Dorsolateral prefrontal cortex (tissue), 120 donors: ENCODE measurements at regions of chr1 and their contacts with region 1.

Region 1: DNA sequence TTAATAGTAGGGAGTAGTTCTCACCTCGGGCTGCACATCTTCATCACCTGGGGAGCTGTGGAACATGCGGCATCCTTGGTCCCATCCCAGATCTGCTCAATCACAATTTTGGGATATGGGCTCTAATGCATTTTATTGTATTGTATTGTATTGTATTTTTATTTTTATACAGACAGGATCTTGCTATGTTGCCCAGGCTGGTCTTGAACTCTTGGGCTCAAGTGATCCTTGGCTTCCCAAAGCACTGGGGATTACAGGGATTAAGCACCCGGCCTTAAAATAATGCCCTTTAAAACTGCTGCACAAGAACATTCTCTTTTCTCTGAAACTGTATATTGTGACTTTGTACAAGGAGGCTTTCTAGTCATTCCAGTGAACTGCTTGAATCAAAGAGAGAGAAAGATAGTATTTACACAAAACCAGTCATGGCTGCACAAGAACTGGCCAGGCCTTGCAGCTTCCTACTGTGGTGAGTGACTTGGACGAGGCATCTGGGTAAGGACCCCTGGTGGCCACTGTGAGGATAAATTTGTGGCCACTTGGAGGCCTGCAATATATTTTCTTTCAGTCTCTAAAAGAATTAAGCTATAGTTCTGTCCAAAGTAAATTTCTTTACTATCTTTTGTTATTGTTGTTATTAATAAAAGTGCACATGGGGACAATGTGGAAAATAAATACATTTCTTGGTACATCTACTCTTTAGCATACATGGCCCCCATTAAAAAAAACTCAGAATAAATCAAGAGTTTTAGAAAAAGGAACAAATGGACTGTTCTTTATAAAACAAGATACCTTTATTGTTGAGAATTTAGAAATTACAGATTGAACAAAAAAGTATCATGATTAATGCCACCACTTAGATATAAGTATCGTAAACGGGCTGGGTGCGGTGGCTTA is 48.0 kb downstream of the TBCE start:
- DNase-seq: peak in 8 of 10 donors; percentile 20 to 60 (median 50)
- H3K4me3 ChIP-seq: no peak overlapping the region
- H3K27ac ChIP-seq: peak overlapping the region in 28 of 59 donors; percentile 2 to 66 (median 44)
- H3K27me3 ChIP-seq: no peaks in the 10 kb centered on the region
- CTCF ChIP-seq: peak; percentile 56 to 89 (median 76)

Region 2: GRCh38 chr1:234373064-234373958 is 1041.9 kb before region 1 on chr1 and contains the start of gene COA6:
- intact Hi-C with region 1: loop called in 1 of 2 experiments (anchors 10 kb)
- DNase-seq: peak; percentile 82 to 92 (median 90)
- H3K4me3 ChIP-seq: peak within 1 kb of the TSS; percentile 60 to 98 (median 86)
- H3K27ac ChIP-seq: peak within 1 kb of the TSS; percentile 92 to 100 (median 98)
- H3K27me3 ChIP-seq: no peaks in the 10 kb centered on the region
- CTCF ChIP-seq: peak in 30 of 56 donors; percentile 4 to 63 (median 28)
- total RNA-seq, gene COA6: 17.7 to 56.0 (median 37.2) TPM

Region 3: GRCh38 chr1:235100194-235100772 is 315.0 kb before region 1 on chr1:
- intact Hi-C with region 1: loop called (anchors 2 to 5 kb)
- DNase-seq: no peak
- H3K4me3 ChIP-seq: no peak overlapping the region
- H3K27ac ChIP-seq: peak overlapping the region in 1 of 59 donors; percentile 5
- H3K27me3 ChIP-seq: no peaks in the 10 kb centered on the region
- CTCF ChIP-seq: no peak

Region 4: DNA sequence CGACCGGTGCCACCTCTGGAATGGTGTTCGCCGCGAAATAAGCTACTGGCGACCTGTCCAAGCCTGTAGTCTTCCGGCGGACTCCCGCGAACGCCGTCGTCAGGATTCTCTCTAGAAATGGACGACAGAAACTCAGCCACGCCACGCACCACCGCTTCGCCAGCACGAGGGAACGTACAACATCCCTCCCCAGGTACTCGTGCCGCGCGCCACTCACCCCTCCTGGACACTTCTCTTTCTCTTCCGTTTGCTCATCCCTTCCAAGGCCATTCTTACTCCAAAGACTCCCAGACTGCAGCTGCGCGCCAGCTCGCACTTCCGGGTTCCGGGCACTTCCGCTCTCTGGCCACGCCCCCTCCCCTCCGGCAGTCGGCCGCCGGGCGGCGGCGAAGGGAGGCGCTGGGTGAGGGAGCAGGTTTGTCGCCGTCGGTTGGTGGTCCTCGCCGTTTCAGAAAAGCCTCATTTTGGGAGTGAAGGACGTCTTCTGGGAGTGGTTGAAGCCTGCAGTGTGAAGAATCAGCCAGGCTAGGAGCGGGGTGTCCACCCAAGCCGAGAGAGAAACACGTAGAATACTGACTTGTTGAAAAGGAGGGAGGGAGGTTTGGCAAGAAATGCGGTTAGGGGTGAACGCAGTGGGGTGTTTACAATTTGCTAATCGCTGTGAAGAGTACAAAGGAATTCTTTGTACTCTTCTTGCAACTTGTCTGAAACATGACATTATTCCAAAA is 254.1 kb before region 1 on chr1 and contains the start of gene RBM34:
- intact Hi-C with region 1: loop called in 1 of 2 experiments (anchors 10 kb)
- DNase-seq: peak; percentile 84 to 95 (median 90)
- H3K4me3 ChIP-seq: peak within 1 kb of the TSS; percentile 62 to 98 (median 83)
- H3K27ac ChIP-seq: peak within 1 kb of the TSS; percentile 2 to 97 (median 87)
- H3K27me3 ChIP-seq: no peaks in the 10 kb centered on the region
- CTCF ChIP-seq: peak in 49 of 56 donors; percentile 6 to 65 (median 42)
- total RNA-seq, gene RBM34: 32.7 to 73.0 (median 56.5) TPM

Region 5: GRCh38 chr1:235367000-235367908 is 48.0 kb before region 1 on chr1 and contains the start of gene TBCE:
- intact Hi-C with region 1: loop called (anchors 1 to 5 kb)
- DNase-seq: peak; percentile 92 to 98 (median 96)
- H3K4me3 ChIP-seq: peak within 1 kb of the TSS; percentile 56 to 100 (median 86)
- H3K27ac ChIP-seq: peak within 1 kb of the TSS in 56 of 59 donors; percentile 9 to 85 (median 67)
- H3K27me3 ChIP-seq: no peaks in the 10 kb centered on the region
- CTCF ChIP-seq: peak in 26 of 56 donors; percentile 3 to 58 (median 26)
- total RNA-seq, gene TBCE: 15.5 to 48.9 (median 30.1) TPM